ENCODE measurements at regions of chr2 and their contacts with region 1.

Region 1: DNA sequence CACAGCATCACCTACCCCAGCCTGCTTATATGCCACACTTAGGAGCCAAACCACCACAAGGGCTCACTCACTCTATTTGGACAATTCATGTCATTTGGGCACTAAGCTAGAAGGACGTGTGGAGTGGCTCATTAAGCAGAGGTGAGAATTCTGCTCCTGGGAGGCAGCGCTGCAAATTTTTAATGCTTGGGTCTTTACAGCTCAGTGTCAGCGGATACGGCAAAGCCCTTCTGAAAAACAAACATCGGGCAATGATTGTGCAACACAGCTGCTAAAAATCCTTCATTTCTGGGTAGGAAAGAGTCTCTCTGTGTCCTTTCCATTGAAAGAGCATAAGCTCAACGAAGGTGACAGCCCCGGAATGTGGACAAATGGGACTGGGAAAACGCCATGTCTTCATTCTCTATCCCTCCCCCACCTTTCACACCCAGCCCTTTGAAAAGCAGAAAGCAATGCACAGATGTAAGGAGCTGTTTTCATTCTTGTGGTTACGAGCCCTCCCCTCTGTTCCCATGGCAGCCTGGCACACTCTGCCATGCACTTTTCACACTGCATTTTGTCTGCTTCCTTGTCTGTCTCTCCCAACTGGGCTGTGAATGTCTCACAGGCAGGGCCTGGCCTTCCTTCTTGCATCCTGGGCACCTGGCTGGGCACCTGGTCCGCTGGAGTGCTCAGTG is 16.0 kb downstream of the TMEM177 start:
- DNase-seq: no peak
- ATAC-seq: no peak
- H3K4me3 ChIP-seq: no peak overlapping the region
- H3K27ac ChIP-seq: no peak overlapping the region
- H3K4me1 ChIP-seq: no peaks in the 10 kb centered on the region
- H3K27me3 ChIP-seq: peaks cover 0 to 15% (median 0%) of the 10 kb centered on the region in 7 donors
- CTCF ChIP-seq: no peak

Region 2: GRCh38 chr2:119641562-119642258 is 53.3 kb before region 1 on chr2:
- intact Hi-C with region 1: no loop called
- DNase-seq: peak; percentile 63 to 66
- ATAC-seq: peak; percentile 75 to 91 (median 84)
- H3K4me3 ChIP-seq: no peak overlapping the region
- H3K27ac ChIP-seq: no peak overlapping the region
- H3K4me1 ChIP-seq: peaks cover 0 to 22% (median 6%) of the 10 kb centered on the region in 9 donors
- H3K27me3 ChIP-seq: peaks cover 0 to 8% (median 0%) of the 10 kb centered on the region in 7 donors
- CTCF ChIP-seq: peak; percentile 69 to 97 (median 94)

Region 3: GRCh38 chr2:119746836-119747686 is 52.1 kb after region 1 on chr2:
- intact Hi-C with region 1: loop called in 2 of 10 experiments (anchors 5 to 10 kb)
- DNase-seq: no peak
- ATAC-seq: no peak
- H3K4me3 ChIP-seq: no peak overlapping the region
- H3K27ac ChIP-seq: no peak overlapping the region
- H3K4me1 ChIP-seq: peaks cover 0 to 10% (median 0%) of the 10 kb centered on the region in 9 donors
- H3K27me3 ChIP-seq: no peaks in the 10 kb centered on the region
- CTCF ChIP-seq: no peak

Measured in heart right ventricle (tissue), 16 donors.